HCT116 (cell line): ENCODE measurements at regions of chr12 and their contacts with region 1.

Region 1: DNA sequence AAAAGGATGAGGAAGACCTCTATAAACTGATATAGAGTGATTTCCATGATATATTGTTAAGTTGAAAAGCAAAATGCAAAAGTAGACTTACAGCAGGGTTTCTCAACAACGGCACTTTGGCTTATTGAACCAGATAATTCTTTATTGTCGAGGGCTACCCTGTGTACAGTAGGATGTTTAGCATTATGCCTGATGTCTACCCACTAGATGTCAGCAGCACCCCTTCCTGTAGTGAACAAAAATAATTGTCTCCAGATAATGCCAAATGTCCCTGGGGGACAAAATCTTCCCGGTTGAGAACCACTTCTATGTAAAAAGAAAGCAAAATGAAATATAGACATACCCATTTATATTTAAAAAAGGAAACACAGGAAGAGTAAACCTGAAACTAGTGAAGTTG is 32.4 kb downstream of the ABCD2 start:
- DNase-seq: peak; percentile 19
- ATAC-seq: peak; percentile 90
- H3K4me3 ChIP-seq: no peak overlapping the region
- H3K27ac ChIP-seq: no peak overlapping the region
- H3K4me1 ChIP-seq: no peaks in the 10 kb centered on the region
- H3K27me3 ChIP-seq: no peaks in the 10 kb centered on the region
- CTCF ChIP-seq: peak; percentile 41 to 57 (median 44); a peak in 4 of 6 replicates
- POLR2A ChIP-seq: no peak
- RAD21 ChIP-seq: peak; percentile 69

Region 2: GRCh38 chr12:39392154-39392925 is 194.9 kb before region 1 on chr12:
- CTCF ChIA-PET with region 1: no interaction called
- POLR2A ChIA-PET with region 1: no interaction called
- RAD21 ChIA-PET with region 1: no interaction called
- intact Hi-C with region 1: no loop called
- DNase-seq: no peak
- ATAC-seq: no peak
- H3K4me3 ChIP-seq: no peak overlapping the region
- H3K27ac ChIP-seq: no peak overlapping the region
- H3K4me1 ChIP-seq: no peaks in the 10 kb centered on the region
- H3K27me3 ChIP-seq: no peaks in the 10 kb centered on the region
- CTCF ChIP-seq: no peak
- POLR2A ChIP-seq: no peak
- RAD21 ChIP-seq: no peak

Region 3: DNA sequence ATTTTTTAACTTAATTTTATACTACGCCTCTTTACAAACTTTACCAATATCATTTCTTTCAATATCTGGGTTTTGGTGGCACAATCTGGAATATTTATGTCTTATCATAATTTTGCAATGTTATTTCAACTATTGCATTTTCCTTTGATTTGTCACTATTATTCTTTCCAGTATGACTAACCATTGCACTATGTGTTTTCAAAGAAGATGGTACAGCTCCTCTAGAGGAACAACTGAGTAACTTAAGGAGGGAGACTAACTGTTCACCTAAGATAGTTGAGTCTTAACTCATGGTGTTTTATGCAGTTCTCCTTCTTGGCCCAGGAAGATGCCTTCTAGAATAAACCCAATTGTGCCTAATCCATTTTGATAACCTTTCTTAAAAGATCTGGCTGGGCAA is 83.8 kb before region 1 on chr12:
- CTCF ChIA-PET with region 1: no interaction called
- POLR2A ChIA-PET with region 1: no interaction called
- RAD21 ChIA-PET with region 1: no interaction called
- intact Hi-C with region 1: no loop called
- DNase-seq: peak; percentile 21
- ATAC-seq: peak; percentile 82
- H3K4me3 ChIP-seq: no peak overlapping the region
- H3K27ac ChIP-seq: no peak overlapping the region
- H3K4me1 ChIP-seq: peaks cover 0 to 6% of the 10 kb centered on the region in 2 experiments; a peak in 2 of 4 replicates
- H3K27me3 ChIP-seq: no peaks in the 10 kb centered on the region
- CTCF ChIP-seq: peak in 2 of 3 experiments; percentile 40 to 58; a peak in 4 of 6 replicates
- POLR2A ChIP-seq: no peak
- RAD21 ChIP-seq: no peak; the same call in 1 of the 2 replicates

Region 4: DNA sequence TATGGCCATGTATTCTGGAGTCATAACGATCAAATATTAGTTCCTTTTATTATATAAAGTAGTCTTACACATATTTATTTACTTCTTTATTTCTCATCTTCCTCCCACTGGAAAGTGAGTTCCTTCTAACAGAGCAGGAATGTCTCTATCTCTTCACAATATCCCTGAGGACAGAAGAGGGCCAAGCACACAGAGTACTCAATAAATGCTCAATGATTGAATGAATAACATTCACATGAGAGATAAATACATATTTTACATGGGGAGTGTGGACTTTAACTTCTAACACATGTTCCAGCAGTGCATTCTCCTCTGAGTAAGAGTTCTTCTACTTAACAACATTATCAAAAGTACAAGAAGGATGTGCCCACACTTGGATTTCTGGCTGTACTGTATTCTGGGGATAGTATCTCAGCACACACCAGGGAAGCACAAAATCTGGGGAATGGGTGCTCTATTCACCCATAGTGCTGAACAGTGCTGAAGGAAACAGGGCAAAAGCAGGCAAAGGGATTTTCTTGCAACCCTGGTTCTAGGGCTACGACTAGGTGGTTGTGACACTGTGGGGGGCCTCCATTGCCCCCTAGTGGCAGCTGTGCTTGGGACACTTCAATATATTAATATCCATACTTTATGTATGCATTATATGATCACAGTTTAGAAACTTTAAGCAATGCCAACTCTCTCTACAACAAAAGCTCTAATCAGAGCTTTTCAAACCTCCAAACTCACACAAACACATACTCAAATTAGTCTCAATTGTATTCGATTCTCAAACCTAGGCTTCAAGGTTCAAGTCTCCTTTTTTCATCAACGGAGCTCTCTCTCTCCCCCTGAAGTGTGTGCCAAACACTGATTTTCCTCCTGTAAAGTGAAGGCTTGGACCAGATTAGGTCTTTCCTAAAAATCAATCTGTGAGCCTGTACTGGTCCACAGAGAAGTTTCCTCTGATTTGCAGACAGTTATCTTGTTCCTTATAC is 403.2 kb after region 1 on chr12:
- CTCF ChIA-PET with region 1: no interaction called
- POLR2A ChIA-PET with region 1: no interaction called
- RAD21 ChIA-PET with region 1: no interaction called
- intact Hi-C with region 1: loop called (anchors 5 kb)
- DNase-seq: peak; percentile 22
- ATAC-seq: peak; percentile 86
- H3K4me3 ChIP-seq: no peak overlapping the region
- H3K27ac ChIP-seq: no peak overlapping the region
- H3K4me1 ChIP-seq: no peaks in the 10 kb centered on the region
- H3K27me3 ChIP-seq: no peaks in the 10 kb centered on the region
- CTCF ChIP-seq: peak; percentile 38 to 95 (median 82); a peak in 5 of 6 replicates
- POLR2A ChIP-seq: no peak
- RAD21 ChIP-seq: peak; percentile 66

Region 5: GRCh38 chr12:40107098-40107802 is 520.0 kb after region 1 on chr12:
- CTCF ChIA-PET with region 1: no interaction called
- POLR2A ChIA-PET with region 1: no interaction called
- RAD21 ChIA-PET with region 1: no interaction called
- intact Hi-C with region 1: loop called (anchors 2 kb)
- DNase-seq: peak; percentile 60
- ATAC-seq: peak; percentile 44
- H3K4me3 ChIP-seq: peak overlapping the region; percentile 10 to 31; a peak in 3 of 4 replicates
- H3K27ac ChIP-seq: no peak overlapping the region
- H3K4me1 ChIP-seq: peaks cover 7 to 25% of the 10 kb centered on the region in 2 experiments; a peak in 3 of 4 replicates
- H3K27me3 ChIP-seq: no peaks in the 10 kb centered on the region
- CTCF ChIP-seq: peak; percentile 84 to 90 (median 89); a peak in 5 of 6 replicates
- POLR2A ChIP-seq: no peak
- RAD21 ChIP-seq: peak; percentile 74